Heart left ventricle (tissue), 16 donors: ENCODE measurements at regions of chr2 and their contacts with region 1.

Region 1: DNA sequence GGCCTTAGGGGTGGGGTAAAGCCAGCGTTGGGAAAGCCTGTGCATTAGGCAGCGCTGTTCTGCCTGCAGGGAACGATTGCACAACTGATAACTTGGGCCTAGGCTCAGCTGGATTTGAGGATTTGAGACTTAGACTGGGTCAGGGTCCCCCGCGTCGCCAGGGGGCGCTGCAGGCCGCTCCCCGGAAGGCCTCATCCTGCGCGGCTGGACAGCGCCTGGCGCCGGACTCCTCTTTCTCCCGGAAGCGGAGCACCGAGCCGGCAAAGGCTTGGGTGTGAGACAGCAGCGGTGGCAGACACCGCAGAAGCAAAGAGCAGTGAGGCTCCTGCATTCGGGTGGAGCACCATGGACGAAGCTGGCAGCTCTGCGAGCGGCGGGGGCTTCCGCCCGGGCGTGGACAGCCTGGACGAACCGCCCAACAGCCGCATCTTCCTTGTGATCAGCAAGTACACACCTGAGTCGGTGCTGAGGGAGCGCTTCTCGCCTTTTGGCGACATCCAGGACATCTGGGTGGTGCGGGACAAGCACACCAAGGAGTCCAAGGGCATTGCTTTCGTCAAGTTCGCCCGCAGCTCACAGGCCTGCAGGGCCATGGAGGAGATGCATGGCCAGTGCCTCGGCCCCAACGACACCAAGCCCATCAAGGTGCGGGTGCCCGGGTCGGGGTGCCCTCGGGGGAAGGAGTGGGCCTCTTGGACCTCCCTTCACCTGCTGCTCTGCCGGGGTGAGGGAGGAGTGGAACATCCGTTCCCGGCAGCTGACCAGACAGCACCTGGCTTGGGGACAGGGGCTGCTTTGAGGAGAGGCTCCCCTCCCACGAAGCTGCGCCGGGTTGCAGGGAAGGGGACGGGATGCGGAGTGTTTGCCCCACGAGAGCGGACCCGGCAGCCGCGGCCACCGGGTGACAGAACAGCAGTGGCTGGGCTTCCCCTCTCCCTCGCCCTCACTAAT is at the start of gene RBM45:
- DNase-seq: peak; percentile 85 to 96 (median 93)
- ATAC-seq: peak; percentile 95 to 99 (median 99)
- H3K4me3 ChIP-seq: peak within 1 kb of the TSS; percentile 63 to 98 (median 92)
- H3K27ac ChIP-seq: peak within 1 kb of the TSS; percentile 49 to 89 (median 79)
- H3K4me1 ChIP-seq: peaks cover 0 to 26% (median 10%) of the 10 kb centered on the region in 12 donors
- H3K27me3 ChIP-seq: no peaks in the 10 kb centered on the region
- CTCF ChIP-seq: peak; percentile 96 to 99 (median 98)
- POLR2A ChIP-seq: peak in 1 of 2 donors; percentile 52
- total RNA-seq, gene RBM45: 3.8 to 11.2 (median 6.8) TPM

Region 2: GRCh38 chr2:178025551-178026185 is 86.8 kb before region 1 on chr2:
- intact Hi-C with region 1: no loop called
- DNase-seq: no peak
- ATAC-seq: no peak
- H3K4me3 ChIP-seq: no peak overlapping the region
- H3K27ac ChIP-seq: no peak overlapping the region
- H3K4me1 ChIP-seq: no peaks in the 10 kb centered on the region
- H3K27me3 ChIP-seq: no peaks in the 10 kb centered on the region
- CTCF ChIP-seq: no peak
- POLR2A ChIP-seq: no peak

Region 3: GRCh38 chr2:178157574-178157973 is 45.1 kb after region 1 on chr2:
- intact Hi-C with region 1: no loop called
- DNase-seq: no peak
- ATAC-seq: no peak
- H3K4me3 ChIP-seq: no peak overlapping the region
- H3K27ac ChIP-seq: no peak overlapping the region
- H3K4me1 ChIP-seq: peaks cover 0 to under 1% (median 0%) of the 10 kb centered on the region in 12 donors
- H3K27me3 ChIP-seq: no peaks in the 10 kb centered on the region
- CTCF ChIP-seq: no peak
- POLR2A ChIP-seq: no peak

Region 4: DNA sequence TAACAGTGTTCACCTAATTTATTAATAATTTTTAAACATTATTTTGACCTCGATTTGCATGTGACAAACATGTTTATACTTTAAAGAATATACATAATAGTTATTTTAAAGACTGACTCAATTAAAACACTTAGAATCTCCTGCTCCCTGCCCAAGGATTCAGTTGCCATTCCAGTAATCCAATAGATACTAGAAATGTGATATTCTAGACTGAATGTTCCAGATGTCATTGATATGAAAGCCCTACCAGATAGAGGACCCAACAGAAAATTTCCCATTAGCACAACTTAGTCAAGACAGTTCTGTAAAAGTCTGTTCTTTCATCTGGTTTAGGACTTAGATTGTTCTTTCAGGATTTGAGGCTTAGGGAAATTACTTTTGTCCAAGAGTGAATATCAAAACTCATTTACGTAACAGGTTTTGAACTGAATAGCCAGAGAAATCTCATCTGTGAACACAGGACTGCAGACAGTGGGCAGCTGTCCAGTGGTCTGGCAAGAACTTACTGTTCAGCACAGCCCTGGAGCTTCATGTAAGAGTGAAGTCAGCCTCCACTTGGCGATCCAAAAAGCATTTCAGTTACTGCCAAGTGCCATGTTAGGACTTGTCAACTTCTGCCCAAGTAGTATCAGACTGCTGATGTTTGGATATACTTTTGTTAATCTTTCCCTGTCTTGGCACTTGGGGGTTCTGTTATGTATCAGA is 159.3 kb after region 1 on chr2:
- intact Hi-C with region 1: loop called in 3 of 10 experiments (anchors 5 to 10 kb)
- DNase-seq: peak; percentile 79 to 93 (median 85)
- ATAC-seq: peak; percentile 94 to 95 (median 94)
- H3K4me3 ChIP-seq: no peak overlapping the region
- H3K27ac ChIP-seq: peak overlapping the region in 11 of 12 donors; percentile 18 to 79 (median 68)
- H3K4me1 ChIP-seq: peaks cover 0 to 33% (median 8%) of the 10 kb centered on the region in 12 donors
- H3K27me3 ChIP-seq: no peaks in the 10 kb centered on the region
- CTCF ChIP-seq: no peak
- POLR2A ChIP-seq: no peak

Region 5: DNA sequence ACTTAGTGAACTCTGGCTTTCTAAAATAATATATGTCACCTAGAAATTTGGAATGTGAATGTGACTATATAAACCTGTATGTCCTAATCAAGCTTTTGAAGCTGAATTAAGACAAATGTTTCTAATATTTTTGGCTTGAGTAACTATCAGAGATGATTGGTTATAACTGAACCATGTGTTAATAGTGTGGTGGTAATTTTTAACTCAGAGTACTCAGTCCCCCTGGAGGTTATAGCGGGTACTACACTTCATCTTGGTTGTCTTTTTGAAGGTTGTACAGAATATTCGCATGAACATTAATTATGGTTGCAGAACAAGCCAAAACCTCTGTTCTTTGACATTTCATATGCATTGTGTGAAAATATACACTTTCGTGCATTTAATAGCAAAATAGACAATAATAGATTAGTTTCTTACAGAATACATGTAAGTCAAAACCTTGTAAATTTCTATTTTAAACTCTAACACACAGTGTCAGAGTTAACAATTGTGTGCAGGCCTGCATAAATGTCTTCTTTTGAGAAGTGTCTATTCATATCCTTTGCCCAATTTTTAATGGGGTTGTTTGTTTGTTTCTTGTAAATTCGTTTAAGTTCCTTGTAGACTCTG is 167.9 kb after region 1 on chr2:
- intact Hi-C with region 1: loop called in 3 of 10 experiments (anchors 5 to 10 kb)
- DNase-seq: peak in 2 of 5 donors; percentile 21 to 27
- ATAC-seq: peak in 3 of 4 donors; percentile 44 to 58 (median 57)
- H3K4me3 ChIP-seq: no peak overlapping the region
- H3K27ac ChIP-seq: no peak overlapping the region
- H3K4me1 ChIP-seq: peaks cover 0 to 13% (median 0%) of the 10 kb centered on the region in 12 donors
- H3K27me3 ChIP-seq: no peaks in the 10 kb centered on the region
- CTCF ChIP-seq: peak; percentile 69 to 92 (median 78)
- POLR2A ChIP-seq: no peak

Region 6: DNA sequence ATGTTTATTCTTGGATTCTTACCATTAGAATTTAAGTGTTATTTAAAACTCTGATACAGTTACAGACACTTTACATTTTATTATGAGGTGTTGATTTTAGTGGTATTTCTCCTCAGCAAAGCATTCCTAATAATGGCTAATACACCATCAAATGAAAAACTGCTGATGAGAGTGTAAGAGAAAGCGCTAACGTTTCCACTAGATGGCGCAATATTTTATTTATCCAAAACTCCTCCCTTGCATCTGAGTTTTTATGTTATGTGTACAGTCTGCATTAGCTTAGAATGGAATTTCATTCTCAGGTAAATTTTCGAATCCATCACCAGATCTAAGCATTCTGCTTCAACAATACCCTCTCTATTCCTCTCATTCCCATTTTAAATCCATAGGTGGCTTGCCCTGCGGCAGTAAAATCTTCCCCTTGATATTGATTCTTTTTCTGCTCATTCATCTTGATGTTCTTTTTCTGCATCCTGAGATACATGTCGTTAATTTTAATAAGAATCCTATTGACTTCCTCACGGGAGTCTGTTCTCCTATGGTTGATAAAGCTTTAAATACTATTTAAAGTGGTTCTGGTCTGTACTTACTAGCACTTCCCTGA is 284.6 kb after region 1 on chr2:
- intact Hi-C with region 1: loop called in 1 of 10 experiments (anchors 10 kb)
- DNase-seq: no peak
- ATAC-seq: peak in 3 of 4 donors; percentile 61 to 71 (median 63)
- H3K4me3 ChIP-seq: no peak overlapping the region
- H3K27ac ChIP-seq: no peak overlapping the region
- H3K4me1 ChIP-seq: peaks cover 0 to 3% (median 0%) of the 10 kb centered on the region in 12 donors
- H3K27me3 ChIP-seq: no peaks in the 10 kb centered on the region
- CTCF ChIP-seq: peak; percentile 55 to 78 (median 72)
- POLR2A ChIP-seq: no peak

Region 7: DNA sequence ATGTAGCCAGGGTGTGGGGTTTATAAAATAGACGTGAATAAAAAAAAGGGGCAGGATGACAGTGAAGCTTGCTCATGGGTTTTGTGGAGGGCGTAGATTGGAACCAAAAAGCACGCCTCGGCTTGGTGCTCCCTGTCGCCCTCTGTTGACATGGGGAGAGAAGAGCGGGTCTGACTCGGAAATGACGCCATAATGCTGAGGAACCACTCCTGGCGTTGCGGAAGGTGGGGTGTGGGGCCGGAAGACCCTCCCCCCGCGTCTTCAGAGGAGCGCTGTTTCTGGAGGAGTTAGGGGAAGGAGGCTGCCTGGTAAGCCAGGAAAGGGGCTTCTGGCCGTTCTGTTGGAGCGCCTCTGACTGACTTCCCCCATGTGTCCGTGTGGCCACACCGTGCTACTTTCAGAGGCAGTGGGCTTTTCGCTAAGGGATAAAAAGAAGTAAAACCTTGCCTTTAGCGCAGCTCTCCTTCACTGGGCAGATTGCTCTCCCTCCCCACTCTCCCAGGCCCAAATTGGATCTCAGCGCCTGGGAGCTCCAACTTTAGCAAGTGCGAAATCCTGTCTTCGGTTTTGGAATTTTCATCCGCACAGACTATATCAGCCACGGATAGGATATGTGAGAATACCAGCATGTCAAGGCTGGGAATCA is 410.6 kb after region 1 on chr2:
- intact Hi-C with region 1: loop called in 1 of 10 experiments (anchors 10 kb)
- DNase-seq: peak; percentile 75 to 90 (median 86)
- ATAC-seq: peak; percentile 69 to 89 (median 86)
- H3K4me3 ChIP-seq: peak overlapping the region; percentile 28 to 75 (median 64)
- H3K27ac ChIP-seq: peak overlapping the region in 11 of 12 donors; percentile 46 to 83 (median 72)
- H3K4me1 ChIP-seq: peaks cover 0 to 14% (median 1%) of the 10 kb centered on the region in 12 donors
- H3K27me3 ChIP-seq: no peaks in the 10 kb centered on the region
- CTCF ChIP-seq: peak; percentile 59 to 88 (median 72)
- POLR2A ChIP-seq: peak in 1 of 2 donors; percentile 49